ENCODE measurements at regions of chr15 and their contacts with region 1.

Region 1: GRCh38 chr15:33226559-33227181 is 32.2 kb upstream of the FMN1 start:
- DNase-seq: no peak
- H3K4me3 ChIP-seq: no peak overlapping the region
- H3K27ac ChIP-seq: no peak overlapping the region
- H3K27me3 ChIP-seq: peaks cover 5% of the 10 kb centered on the region
- CTCF ChIP-seq: peak; percentile 24; the same call in 1 of the 2 replicates

Region 2: GRCh38 chr15:32029862-32030781 is 1196.5 kb before region 1 on chr15 and contains the start of gene CHRNA7:
- CTCF ChIA-PET with region 1: interaction called, 11 read pairs
- POLR2A ChIA-PET with region 1: no interaction called
- DNase-seq: no peak
- H3K4me3 ChIP-seq: peak within 1 kb of the TSS; percentile 52
- H3K27ac ChIP-seq: no peak within 1 kb of the TSS
- H3K27me3 ChIP-seq: peaks cover 19% of the 10 kb centered on the region
- CTCF ChIP-seq: no peak; the same call in 1 of the 2 replicates
- polyA plus RNA-seq, gene CHRNA7: 0.04 and 0.27 TPM in 2 replicates

Region 3: DNA sequence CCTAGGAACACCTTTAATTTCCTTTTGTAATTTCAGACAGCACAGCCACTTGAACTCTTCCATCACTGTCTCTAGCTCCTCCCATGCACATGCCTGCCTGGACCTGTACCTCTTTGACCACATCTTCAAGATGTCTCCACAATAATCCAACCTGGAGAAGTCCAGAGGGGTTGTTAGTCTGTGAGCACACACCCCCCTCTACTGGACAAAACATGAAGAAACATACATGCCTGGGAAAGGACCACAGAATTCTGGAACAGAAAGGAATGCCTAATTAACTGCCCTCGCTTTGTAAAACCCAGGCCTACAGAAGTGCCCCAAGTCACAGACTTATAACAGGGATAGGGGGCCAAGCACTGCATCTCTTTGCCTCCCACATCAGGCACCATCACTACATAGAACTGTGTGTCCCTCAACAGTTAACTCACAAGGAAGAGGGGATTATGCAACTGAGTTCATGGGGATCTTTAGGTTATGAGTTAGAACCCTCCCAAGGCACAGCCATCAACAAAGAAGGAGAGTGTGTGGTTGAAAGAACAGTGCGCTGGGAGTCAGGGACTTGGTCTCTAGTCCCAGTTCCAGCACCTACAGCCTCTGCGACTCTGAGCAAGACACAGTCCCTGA is 93.8 kb before region 1 on chr15:
- CTCF ChIA-PET with region 1: no interaction called
- POLR2A ChIA-PET with region 1: no interaction called
- DNase-seq: peak; percentile 61
- H3K4me3 ChIP-seq: no peak overlapping the region
- H3K27ac ChIP-seq: no peak overlapping the region
- H3K27me3 ChIP-seq: no peaks in the 10 kb centered on the region
- CTCF ChIP-seq: peak; percentile 89

Measured in AG04450 (cell line).